ENCODE measurements at regions of chr11 and their contacts with region 1.

Region 1: GRCh38 chr11:62612366-62613290 is at the starts of genes EML3 and ROM1:
- DNase-seq: peak; percentile 92
- CTCF ChIP-seq: peak; percentile 87

Region 2: GRCh38 chr11:62444236-62444833 is 168.3 kb before region 1 on chr11:
- CTCF ChIA-PET with region 1: no interaction called
- POLR2A ChIA-PET with region 1: no interaction called
- DNase-seq: peak; percentile 57
- CTCF ChIP-seq: no peak

Region 3: DNA sequence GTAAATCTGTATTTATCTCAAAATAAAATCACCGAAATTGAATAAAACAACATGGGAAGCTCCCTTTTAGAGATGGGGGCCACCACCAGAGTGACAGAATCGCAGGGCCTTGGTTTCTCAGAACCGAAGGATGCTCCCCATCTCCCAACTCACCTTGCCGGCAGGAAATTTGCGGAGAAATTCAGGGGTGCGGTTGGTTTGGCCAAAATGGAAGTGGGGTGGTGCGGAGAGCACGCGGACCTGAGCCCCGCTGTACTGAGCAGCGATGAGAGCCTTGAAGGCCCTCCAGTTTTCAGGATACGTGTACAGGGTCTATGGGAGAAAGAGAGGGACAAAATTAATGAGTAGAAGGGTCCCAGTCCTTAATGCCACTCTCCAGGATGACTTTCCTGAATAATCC is 40.2 kb before region 1 on chr11:
- CTCF ChIA-PET with region 1: no interaction called
- POLR2A ChIA-PET with region 1: no interaction called
- DNase-seq: no peak
- CTCF ChIP-seq: no peak

Region 4: DNA sequence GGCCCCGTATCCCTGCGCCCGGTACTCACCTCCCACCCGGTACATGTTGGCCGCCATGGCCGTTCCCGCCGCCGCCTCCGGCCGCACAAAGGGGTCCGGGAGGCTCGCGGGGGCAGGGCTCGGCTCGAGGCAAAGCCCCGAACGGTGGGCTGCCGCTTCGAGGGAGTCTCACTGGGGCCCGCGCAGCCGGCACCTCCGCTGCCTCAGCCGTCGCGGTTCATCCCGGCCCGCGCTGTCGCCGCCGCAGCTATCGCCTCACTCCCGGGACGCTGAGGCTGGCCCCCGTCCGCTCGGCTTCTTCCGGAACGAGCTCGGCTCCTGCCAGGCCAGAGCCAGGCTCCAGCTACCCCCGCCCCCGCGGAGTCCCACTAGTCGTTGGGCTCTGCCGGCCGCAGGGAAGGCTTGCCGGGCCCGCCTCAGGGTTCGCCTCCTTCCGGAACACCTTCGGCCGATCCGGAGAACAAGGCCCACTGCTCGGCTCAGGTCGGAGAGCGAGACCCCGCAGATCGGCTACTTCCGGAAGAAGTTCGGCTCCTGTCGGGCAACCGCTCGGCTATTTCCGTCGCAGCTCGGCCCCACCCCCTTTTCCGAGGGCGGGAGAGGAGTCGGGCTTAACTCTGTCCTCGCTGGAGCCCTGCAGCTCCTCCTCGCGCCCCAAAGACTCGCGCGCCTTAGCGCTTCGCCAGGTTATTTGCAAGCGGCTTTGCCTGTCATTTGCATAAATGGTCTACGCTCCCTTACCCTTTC is 11.1 kb before region 1 on chr11 and contains the start of gene MTA2:
- CTCF ChIA-PET with region 1: interaction called, 12 read pairs
- POLR2A ChIA-PET with region 1: interaction called, 9 read pairs
- DNase-seq: peak; percentile 98
- CTCF ChIP-seq: peak; percentile 16

Measured in GM10248 (cell line).